ENCODE measurements at regions of chr7 and their contacts with region 1.

Region 1: DNA sequence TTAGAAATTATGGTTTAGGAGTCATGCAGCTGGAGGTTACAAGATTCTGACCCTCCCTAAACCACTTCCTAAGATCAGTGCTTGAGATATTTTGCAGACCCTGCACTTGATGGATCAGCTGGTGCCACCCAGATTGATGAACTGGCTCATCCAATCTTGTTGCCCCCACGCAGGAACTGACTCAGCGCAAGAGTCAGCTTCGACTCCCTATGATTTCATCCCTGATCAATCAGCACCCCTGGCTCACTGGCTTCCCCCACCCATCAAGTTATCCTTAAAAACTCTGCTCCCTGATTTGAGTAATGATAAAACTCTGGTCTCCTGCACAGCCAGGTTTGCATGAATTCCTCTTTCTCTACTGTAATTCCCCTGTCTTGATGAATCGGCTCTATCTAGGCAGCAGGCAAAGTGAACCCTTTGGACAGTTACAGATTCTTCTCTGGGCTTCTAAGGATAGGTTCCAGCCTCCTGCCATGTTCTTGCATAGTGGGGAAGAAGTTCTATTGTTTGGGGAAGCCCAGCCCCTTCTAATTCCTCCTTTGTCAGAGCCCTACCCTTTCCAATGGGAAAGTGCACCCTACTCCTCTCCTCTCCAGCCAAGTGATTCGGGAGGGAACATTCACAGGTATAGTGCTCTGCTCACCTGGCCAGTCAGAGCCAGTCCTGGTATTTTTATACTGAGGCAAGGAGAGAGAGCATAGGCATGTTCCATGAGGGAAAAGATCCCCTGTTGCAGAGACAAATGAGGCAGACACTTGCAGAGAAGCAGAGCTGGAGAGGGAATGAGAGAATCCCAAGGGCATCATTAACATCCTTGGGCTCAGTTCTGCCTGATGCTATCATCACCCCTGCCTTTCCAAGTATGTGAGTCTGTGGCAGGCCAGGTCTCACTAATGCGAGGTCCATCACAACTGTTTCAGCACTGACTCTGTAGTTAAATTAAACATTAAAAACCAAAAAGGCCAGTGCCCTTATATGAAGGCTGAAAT is 224.4 kb upstream of the GALNT17 start:
- DNase-seq: no peak
- H3K4me3 ChIP-seq: no peak overlapping the region
- H3K27ac ChIP-seq: no peak overlapping the region
- H3K4me1 ChIP-seq: no peaks in the 10 kb centered on the region
- H3K27me3 ChIP-seq: no peaks in the 10 kb centered on the region
- CTCF ChIP-seq: no peak
- POLR2A ChIP-seq: no peak

Region 2: GRCh38 chr7:70749831-70750230 is 157.7 kb before region 1 on chr7:
- intact Hi-C with region 1: loop called (anchors 5 kb)
- DNase-seq: no peak
- H3K4me3 ChIP-seq: no peak overlapping the region
- H3K27ac ChIP-seq: no peak overlapping the region
- H3K4me1 ChIP-seq: peaks cover 0 to 2% of the 10 kb centered on the region in 2 donors
- H3K27me3 ChIP-seq: no peaks in the 10 kb centered on the region
- CTCF ChIP-seq: no peak
- POLR2A ChIP-seq: no peak

Region 3: DNA sequence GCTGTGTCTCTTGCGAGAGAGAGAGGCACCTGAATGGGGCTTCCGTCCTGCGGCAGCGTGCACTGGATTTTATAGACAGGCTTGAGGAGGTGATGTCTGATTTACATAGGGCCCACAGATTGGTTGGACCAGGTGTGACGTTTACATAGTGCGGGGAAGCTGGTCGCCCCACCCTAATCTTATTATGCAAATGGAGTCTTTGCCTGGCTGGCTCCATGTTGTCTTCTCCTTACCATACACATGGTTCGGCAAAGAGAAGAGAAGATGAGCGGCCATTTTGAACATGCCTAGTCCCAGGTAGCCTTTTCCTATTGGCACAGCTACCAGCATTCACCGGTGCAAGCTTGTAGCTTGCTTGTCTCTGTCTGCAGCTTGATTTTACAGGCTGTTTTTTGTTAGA is 14.1 kb before region 1 on chr7:
- intact Hi-C with region 1: no loop called
- DNase-seq: no peak
- H3K4me3 ChIP-seq: no peak overlapping the region
- H3K27ac ChIP-seq: no peak overlapping the region
- H3K4me1 ChIP-seq: no peaks in the 10 kb centered on the region
- H3K27me3 ChIP-seq: no peaks in the 10 kb centered on the region
- CTCF ChIP-seq: no peak
- POLR2A ChIP-seq: no peak

Measured in breast epithelium (tissue), 4 donors.